ENCODE measurements at regions of chr13 and their contacts with region 1.

Region 1: DNA sequence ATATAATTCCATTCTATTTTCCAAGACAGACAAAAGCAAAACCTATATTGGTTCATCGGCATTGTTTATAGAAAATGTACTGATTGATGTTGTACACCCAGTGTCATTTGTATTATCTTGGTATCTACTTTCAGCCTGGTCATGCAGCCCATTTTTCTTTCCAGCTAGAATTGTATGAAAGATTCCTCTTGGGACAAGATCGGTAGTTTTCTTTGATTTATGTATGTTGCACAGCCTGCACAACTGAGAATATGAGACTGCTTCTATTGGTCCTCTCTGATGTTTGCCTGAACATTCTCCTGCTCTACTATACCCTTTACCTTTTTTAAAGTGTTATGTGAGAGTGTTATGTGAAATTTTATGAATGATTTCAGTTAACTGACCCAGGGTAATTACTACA is 487.7 kb upstream of the PRR20A start:
- DNase-seq: no peak
- ATAC-seq: no peak
- H3K4me3 ChIP-seq: no peak overlapping the region
- H3K4me3 Mint-ChIP-seq: no peak overlapping the region
- H3K27ac ChIP-seq: no peak overlapping the region
- H3K27ac Mint-ChIP-seq: no peak overlapping the region
- H3K4me1 ChIP-seq: no peaks in the 10 kb centered on the region
- H3K4me1 Mint-ChIP-seq: no peaks in the 10 kb centered on the region
- H3K27me3 ChIP-seq: no peaks in the 10 kb centered on the region
- H3K27me3 Mint-ChIP-seq: no peaks in the 10 kb centered on the region
- CTCF ChIP-seq: no peak

Region 2: DNA sequence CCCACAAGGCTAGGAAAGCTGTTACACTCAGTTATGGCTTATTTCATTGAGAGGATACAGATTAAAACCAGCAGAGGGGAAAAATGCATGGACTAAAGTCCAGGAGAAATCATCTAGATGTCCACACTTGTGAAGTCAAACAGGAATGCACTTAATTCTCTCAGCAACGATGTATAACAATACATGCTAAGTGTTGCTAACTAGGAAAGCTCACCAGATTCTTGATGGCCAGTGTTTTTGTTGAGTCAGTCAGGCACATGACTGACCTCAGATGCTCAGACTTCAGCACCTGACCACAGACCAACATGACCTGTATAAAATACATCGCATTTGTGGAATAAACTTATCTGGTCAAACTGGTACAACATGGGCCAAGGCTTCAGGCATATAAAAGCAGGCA is 17.5 kb after region 1 on chr13:
- CTCF ChIA-PET with region 1: no interaction called
- POLR2A ChIA-PET with region 1: no interaction called
- intact Hi-C with region 1: loop called in 1 of 2 experiments (anchors 2 kb)
- DNase-seq: no peak
- ATAC-seq: no peak
- H3K4me3 ChIP-seq: no peak overlapping the region
- H3K4me3 Mint-ChIP-seq: no peak overlapping the region
- H3K27ac ChIP-seq: no peak overlapping the region
- H3K27ac Mint-ChIP-seq: no peak overlapping the region
- H3K4me1 ChIP-seq: no peaks in the 10 kb centered on the region
- H3K4me1 Mint-ChIP-seq: no peaks in the 10 kb centered on the region
- H3K27me3 ChIP-seq: no peaks in the 10 kb centered on the region
- H3K27me3 Mint-ChIP-seq: no peaks in the 10 kb centered on the region
- CTCF ChIP-seq: no peak

Region 3: GRCh38 chr13:56681404-56681803 is 28.4 kb after region 1 on chr13:
- CTCF ChIA-PET with region 1: no interaction called
- POLR2A ChIA-PET with region 1: no interaction called
- intact Hi-C with region 1: no loop called
- DNase-seq: no peak
- ATAC-seq: no peak
- H3K4me3 ChIP-seq: no peak overlapping the region
- H3K4me3 Mint-ChIP-seq: no peak overlapping the region
- H3K27ac ChIP-seq: no peak overlapping the region
- H3K27ac Mint-ChIP-seq: no peak overlapping the region
- H3K4me1 ChIP-seq: no peaks in the 10 kb centered on the region
- H3K4me1 Mint-ChIP-seq: no peaks in the 10 kb centered on the region
- H3K27me3 ChIP-seq: no peaks in the 10 kb centered on the region
- H3K27me3 Mint-ChIP-seq: no peaks in the 10 kb centered on the region
- CTCF ChIP-seq: no peak

Measured in CD8-positive, alpha-beta T cell (primary cell).